ENCODE measurements at regions of chr4 and their contacts with region 1.

Region 1: GRCh38 chr4:168917138-168917779 is 92.8 kb downstream of the CBR4 start:
- DNase-seq: no peak
- H3K4me3 ChIP-seq: no peak overlapping the region
- H3K27ac ChIP-seq: peak overlapping the region; percentile 38
- H3K4me1 ChIP-seq: peaks cover 36% of the 10 kb centered on the region
- H3K27me3 ChIP-seq: no peaks in the 10 kb centered on the region
- CTCF ChIP-seq: peak; percentile 69

Region 2: DNA sequence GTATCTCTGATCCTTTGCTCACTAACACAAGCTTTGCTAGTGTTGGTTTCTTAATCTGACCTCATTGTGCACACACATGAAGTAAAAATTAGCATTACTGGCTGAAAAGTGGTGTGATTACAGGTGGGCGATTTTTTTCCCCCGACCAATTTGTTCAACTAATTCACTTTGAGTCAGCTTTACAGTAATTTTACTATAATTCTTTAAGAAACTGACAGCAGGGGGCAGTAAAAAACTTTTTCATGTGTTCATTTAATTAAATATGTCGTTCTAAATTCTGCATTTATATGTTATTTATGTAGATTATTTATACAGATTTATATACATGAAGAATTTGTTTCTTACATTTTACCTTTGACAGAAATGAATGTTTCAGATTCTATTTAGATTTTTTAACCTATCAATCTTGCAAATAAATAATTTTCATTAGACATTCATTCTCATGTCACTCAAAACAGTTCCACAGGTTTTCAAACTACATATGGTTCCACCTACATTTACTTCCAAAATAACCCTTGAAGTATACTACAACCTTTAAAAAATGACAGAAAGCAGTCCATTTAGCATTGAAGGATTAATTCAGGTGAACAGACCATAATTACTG is 402.9 kb before region 1 on chr4:
- intact Hi-C with region 1: loop called (anchors 10 kb)
- DNase-seq: no peak
- H3K4me3 ChIP-seq: peak overlapping the region; percentile 17
- H3K27ac ChIP-seq: peak overlapping the region; percentile 57
- H3K4me1 ChIP-seq: peaks cover 71% of the 10 kb centered on the region
- H3K27me3 ChIP-seq: no peaks in the 10 kb centered on the region
- CTCF ChIP-seq: peak; percentile 67

Region 3: DNA sequence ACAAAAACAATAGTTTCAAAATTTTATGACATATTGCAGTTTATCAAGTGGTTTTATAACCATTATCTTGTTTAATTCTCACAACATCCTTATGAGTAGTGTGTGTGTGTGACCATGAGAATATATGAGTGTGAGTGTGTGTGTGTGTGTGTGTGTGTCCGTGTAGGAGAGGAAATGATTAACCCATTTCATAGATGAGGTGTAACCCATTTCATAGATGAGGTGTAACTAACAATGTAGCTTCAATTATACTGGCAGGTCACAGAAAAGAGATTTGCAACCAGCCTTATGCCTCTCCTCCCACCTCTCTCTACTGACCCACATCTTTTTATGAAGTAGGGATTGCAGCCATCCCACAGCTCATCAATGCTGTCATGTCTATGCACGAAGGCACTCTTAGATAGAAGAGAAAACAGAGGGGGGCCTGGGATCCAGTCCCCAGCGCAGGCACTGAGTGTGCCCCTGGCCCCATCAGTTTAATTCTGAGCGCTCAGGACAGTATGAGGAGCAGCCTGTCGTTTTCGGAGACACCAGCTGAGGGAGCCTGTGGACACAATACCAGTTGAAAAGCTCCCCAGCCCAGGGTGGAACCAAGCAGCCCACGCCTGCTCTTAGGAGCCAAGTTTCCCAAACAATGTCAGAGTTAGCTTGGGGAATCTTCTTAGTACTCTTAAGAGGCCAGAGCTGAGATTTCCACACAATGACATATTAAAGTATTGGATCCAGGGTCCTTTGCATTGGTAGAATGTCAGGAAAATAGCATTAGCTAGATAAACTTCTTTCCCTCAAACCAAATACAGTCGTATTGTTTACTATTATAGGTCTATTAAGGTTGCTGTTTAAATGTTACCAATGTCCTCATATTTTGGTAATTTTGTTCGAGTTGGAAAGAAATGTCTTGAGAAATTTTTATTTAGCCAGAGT is 331.8 kb before region 1 on chr4:
- intact Hi-C with region 1: loop called (anchors 10 kb)
- DNase-seq: peak; percentile 78
- H3K4me3 ChIP-seq: no peak overlapping the region
- H3K27ac ChIP-seq: peak overlapping the region; percentile 43
- H3K4me1 ChIP-seq: peaks cover 48% of the 10 kb centered on the region
- H3K27me3 ChIP-seq: no peaks in the 10 kb centered on the region
- CTCF ChIP-seq: peak; percentile 85

Region 4: GRCh38 chr4:168710353-168710946 is 206.8 kb before region 1 on chr4:
- intact Hi-C with region 1: loop called (anchors 5 kb)
- DNase-seq: no peak
- H3K4me3 ChIP-seq: no peak overlapping the region
- H3K27ac ChIP-seq: peak overlapping the region; percentile 67
- H3K4me1 ChIP-seq: peaks cover 24% of the 10 kb centered on the region
- H3K27me3 ChIP-seq: no peaks in the 10 kb centered on the region
- CTCF ChIP-seq: peak; percentile 73